HEK293 (cell line): ENCODE measurements at regions of chr6 and their contacts with region 1.

Region 1: GRCh38 chr6:136317021-136317694 is 27.5 kb upstream of the BCLAF1 start:
- H3K4me3 ChIP-seq: no peak overlapping the region
- H3K27ac ChIP-seq: no peak overlapping the region
- H3K4me1 ChIP-seq: no peaks in the 10 kb centered on the region
- CTCF ChIP-seq: peak; percentile 47

Region 2: DNA sequence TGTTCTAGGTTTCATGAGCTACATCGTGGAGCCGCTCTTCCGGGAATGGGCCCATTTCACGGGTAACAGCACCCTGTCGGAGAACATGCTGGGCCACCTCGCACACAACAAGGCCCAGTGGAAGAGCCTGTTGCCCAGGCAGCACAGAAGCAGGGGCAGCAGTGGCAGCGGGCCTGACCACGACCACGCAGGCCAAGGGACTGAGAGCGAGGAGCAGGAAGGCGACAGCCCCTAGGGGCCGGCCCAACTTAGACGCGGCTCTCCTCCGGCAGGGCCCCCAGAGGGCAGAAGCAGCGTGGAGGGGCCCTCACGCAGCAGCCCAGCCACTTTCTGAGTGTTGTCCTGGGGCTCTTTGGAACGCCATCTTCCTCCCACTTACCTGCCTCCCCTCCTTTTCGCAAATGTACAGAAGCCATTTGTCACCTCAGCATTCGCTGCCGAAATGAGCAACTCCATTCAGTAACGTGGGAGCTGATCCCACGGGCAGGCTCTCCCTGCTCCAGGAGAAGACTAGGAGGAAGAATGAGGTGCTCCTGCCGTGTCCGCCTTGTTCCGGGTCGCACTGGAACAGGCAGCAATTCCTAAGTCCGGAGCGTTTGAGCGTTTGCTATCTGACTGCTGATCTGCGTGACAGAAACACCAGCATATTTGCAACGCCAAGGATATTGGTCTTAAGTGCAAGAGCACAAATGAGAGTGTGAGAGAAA is 125.4 kb before region 1 on chr6:
- CTCF ChIA-PET with region 1: no interaction called
- POLR2A ChIA-PET with region 1: no interaction called
- H3K4me3 ChIP-seq: no peak overlapping the region
- H3K27ac ChIP-seq: no peak overlapping the region
- H3K4me1 ChIP-seq: no peaks in the 10 kb centered on the region
- CTCF ChIP-seq: no peak

Region 3: GRCh38 chr6:136249811-136250685 is 67.1 kb before region 1 on chr6 and contains the start of gene MTFR2:
- CTCF ChIA-PET with region 1: interaction called, 22 read pairs
- POLR2A ChIA-PET with region 1: interaction called, 9 read pairs
- H3K4me3 ChIP-seq: peak within 1 kb of the TSS; percentile 80
- H3K27ac ChIP-seq: peak within 1 kb of the TSS; percentile 51
- H3K4me1 ChIP-seq: peaks cover 12% of the 10 kb centered on the region; the same call in 1 of the 2 replicates
- CTCF ChIP-seq: peak; percentile 87; the same call in 1 of the 2 replicates